Ovary (tissue), 10 donors: ENCODE measurements at regions of chr7 and their contacts with region 1.

Region 1: GRCh38 chr7:126426652-126427051 is 826.1 kb downstream of the GRM8 start:
- DNase-seq: no peak
- H3K4me3 ChIP-seq: no peak overlapping the region
- H3K27ac ChIP-seq: no peak overlapping the region
- H3K4me1 ChIP-seq: no peaks in the 10 kb centered on the region
- H3K27me3 ChIP-seq: no peaks in the 10 kb centered on the region
- CTCF ChIP-seq: no peak
- EP300 ChIP-seq: no peak
- POLR2A ChIP-seq: no peak

Region 2: GRCh38 chr7:126398851-126399529 is 27.7 kb before region 1 on chr7:
- intact Hi-C with region 1: loop called in 1 of 4 experiments (anchors 2 kb)
- DNase-seq: no peak
- H3K4me3 ChIP-seq: no peak overlapping the region
- H3K27ac ChIP-seq: no peak overlapping the region
- H3K4me1 ChIP-seq: no peaks in the 10 kb centered on the region
- H3K27me3 ChIP-seq: no peaks in the 10 kb centered on the region
- CTCF ChIP-seq: no peak
- EP300 ChIP-seq: no peak
- POLR2A ChIP-seq: no peak